PC-3 (cell line): ENCODE measurements at regions of chr6 and their contacts with region 1.

Region 1: GRCh38 chr6:53348371-53349208 is at the start of gene ELOVL5:
- DNase-seq: peak; percentile 91
- ATAC-seq: peak; percentile 65
- H3K4me3 ChIP-seq: peak within 1 kb of the TSS; percentile 96
- H3K27ac ChIP-seq: peak within 1 kb of the TSS; percentile 61
- H3K4me1 ChIP-seq: peaks cover 12% of the 10 kb centered on the region
- H3K27me3 ChIP-seq: no peaks in the 10 kb centered on the region
- CTCF ChIP-seq: no peak
- total RNA-seq, gene ELOVL5: 57.2 and 62.7 TPM in 2 replicates

Region 2: GRCh38 chr6:53244958-53245357 is 103.6 kb before region 1 on chr6:
- CTCF ChIA-PET with region 1: no interaction called
- POLR2A ChIA-PET with region 1: no interaction called
- intact Hi-C with region 1: no loop called
- DNase-seq: no peak
- ATAC-seq: no peak
- H3K4me3 ChIP-seq: no peak overlapping the region
- H3K27ac ChIP-seq: no peak overlapping the region
- H3K4me1 ChIP-seq: peaks cover 7% of the 10 kb centered on the region
- H3K27me3 ChIP-seq: no peaks in the 10 kb centered on the region
- CTCF ChIP-seq: no peak

Region 3: DNA sequence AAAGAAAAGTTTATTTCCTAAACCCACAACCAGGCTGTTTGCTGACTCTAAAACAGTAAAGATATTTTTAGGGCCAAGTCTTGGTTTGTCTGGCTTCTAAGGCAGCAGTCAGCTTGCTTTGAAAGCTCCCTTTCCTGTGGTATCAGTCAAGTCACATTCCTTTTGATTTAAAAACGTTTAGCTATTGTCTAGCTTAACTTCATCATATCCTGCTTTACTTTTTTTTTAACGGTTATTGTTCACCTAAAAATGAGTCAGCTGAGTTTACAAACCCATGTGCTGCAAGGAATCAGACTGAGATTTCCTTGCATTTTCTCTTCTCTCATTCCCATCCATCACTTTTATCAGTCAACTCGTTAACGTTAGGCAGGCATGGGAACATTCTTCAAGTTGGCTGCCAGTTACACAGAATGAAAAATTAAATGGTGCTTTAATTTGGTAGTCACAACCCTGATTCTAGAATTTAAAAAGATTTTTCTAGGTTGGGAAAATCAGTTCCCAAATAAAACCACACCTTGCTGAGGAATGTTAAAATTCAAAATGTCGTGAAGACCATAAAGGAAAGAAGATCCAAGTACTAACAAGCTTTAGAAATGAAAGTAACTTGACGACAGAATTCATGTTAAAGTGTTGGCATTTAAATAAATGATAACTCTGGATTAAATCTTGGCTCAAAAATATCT is 45.8 kb before region 1 on chr6:
- CTCF ChIA-PET with region 1: interaction called, 3 read pairs
- POLR2A ChIA-PET with region 1: no interaction called
- intact Hi-C with region 1: loop called (anchors 2 kb)
- DNase-seq: peak; percentile 92
- ATAC-seq: peak; percentile 79
- H3K4me3 ChIP-seq: peak overlapping the region; percentile 48
- H3K27ac ChIP-seq: peak overlapping the region; percentile 98
- H3K4me1 ChIP-seq: peaks cover 55% of the 10 kb centered on the region
- H3K27me3 ChIP-seq: no peaks in the 10 kb centered on the region
- CTCF ChIP-seq: no peak

Region 4: DNA sequence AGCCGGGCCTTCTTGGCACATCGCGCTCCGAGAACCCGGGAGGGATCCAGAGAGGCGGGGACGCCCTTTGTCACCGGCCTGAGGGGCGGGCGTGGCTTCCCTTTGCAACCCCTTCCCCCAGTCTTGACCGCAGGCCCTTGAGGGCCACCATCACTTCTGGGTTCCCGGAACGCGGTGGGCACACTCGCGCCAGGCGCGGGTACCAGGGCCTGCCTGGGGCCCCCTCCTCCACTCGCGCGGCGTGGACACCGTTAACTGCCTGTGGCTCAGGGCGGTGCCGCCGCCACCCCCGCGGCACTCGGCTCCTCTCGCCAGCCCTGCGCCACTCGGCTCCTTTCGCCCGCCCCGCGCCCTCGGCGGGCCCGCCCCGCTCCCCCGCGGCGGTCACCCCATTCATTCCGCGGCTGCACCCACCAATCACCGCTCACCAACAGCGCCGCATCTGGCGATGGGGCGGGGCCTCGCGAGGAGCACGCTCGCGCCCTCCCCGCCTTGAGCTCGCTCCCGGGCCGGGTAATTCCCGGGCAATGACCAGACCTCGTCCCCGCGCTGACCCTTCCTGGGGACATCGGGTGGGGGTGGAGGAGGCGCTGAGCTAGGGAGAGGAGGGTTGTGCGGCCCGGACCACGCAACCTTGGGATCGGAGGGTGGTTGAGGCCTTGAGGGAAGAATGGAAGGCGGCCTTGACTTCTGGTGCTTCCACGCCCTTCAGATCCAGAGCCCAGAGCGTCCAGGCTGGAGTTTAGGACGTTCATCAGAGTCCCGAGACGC is 10.7 kb after region 1 on chr6:
- CTCF ChIA-PET with region 1: no interaction called
- POLR2A ChIA-PET with region 1: interaction called, 3 read pairs
- intact Hi-C with region 1: loop called (anchors 1 kb)
- DNase-seq: peak; percentile 96
- ATAC-seq: peak; percentile 94
- H3K4me3 ChIP-seq: peak overlapping the region; percentile 72
- H3K27ac ChIP-seq: peak overlapping the region; percentile 88
- H3K4me1 ChIP-seq: peaks cover 42% of the 10 kb centered on the region
- H3K27me3 ChIP-seq: no peaks in the 10 kb centered on the region
- CTCF ChIP-seq: no peak

Region 5: GRCh38 chr6:53410508-53411258 is 62.1 kb after region 1 on chr6:
- CTCF ChIA-PET with region 1: no interaction called
- POLR2A ChIA-PET with region 1: no interaction called
- intact Hi-C with region 1: loop called (anchors 1 kb)
- DNase-seq: peak; percentile 71
- ATAC-seq: peak; percentile 94
- H3K4me3 ChIP-seq: no peak overlapping the region
- H3K27ac ChIP-seq: no peak overlapping the region
- H3K4me1 ChIP-seq: peaks cover 3% of the 10 kb centered on the region; the same call in 1 of the 2 replicates
- H3K27me3 ChIP-seq: no peaks in the 10 kb centered on the region
- CTCF ChIP-seq: peak; percentile 93

Region 6: GRCh38 chr6:53441761-53442160 is 93.2 kb after region 1 on chr6:
- CTCF ChIA-PET with region 1: no interaction called
- POLR2A ChIA-PET with region 1: no interaction called
- intact Hi-C with region 1: no loop called
- DNase-seq: no peak
- ATAC-seq: no peak
- H3K4me3 ChIP-seq: no peak overlapping the region
- H3K27ac ChIP-seq: no peak overlapping the region
- H3K4me1 ChIP-seq: peaks cover 25% of the 10 kb centered on the region
- H3K27me3 ChIP-seq: no peaks in the 10 kb centered on the region
- CTCF ChIP-seq: no peak

Region 7: GRCh38 chr6:53829698-53830221 is 481.2 kb after region 1 on chr6:
- CTCF ChIA-PET with region 1: no interaction called
- POLR2A ChIA-PET with region 1: no interaction called
- intact Hi-C with region 1: no loop called
- DNase-seq: no peak
- ATAC-seq: no peak
- H3K4me3 ChIP-seq: no peak overlapping the region
- H3K27ac ChIP-seq: no peak overlapping the region
- H3K4me1 ChIP-seq: peaks cover 11% of the 10 kb centered on the region
- H3K27me3 ChIP-seq: no peaks in the 10 kb centered on the region
- CTCF ChIP-seq: no peak